PC-9 (cell line): ENCODE measurements at regions of chr3 and their contacts with region 1.

Region 1: DNA sequence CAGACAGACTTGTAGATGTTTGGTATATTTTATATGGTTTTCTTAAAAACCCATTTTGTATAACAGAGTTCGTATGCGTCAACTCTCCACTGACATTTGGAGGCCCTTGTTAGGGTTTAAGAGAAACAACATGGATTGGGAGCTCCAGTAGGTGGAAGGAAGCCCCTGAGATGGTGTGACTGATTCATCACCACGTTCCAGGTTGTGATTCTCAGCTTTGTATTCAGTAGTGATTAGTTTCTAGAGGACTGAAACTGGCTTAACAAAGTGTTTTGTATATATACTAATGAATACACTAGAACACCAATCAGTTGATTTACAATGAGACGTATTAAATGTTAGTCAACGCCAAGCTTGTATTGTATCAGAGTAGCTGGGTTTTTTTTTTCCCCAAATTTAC is 33.9 kb downstream of the SNRK start:
- DNase-seq: no peak
- H3K4me3 ChIP-seq: no peak overlapping the region
- H3K27ac ChIP-seq: no peak overlapping the region
- H3K4me1 ChIP-seq: no peaks in the 10 kb centered on the region
- H3K27me3 ChIP-seq: no peaks in the 10 kb centered on the region
- CTCF ChIP-seq: no peak

Region 2: DNA sequence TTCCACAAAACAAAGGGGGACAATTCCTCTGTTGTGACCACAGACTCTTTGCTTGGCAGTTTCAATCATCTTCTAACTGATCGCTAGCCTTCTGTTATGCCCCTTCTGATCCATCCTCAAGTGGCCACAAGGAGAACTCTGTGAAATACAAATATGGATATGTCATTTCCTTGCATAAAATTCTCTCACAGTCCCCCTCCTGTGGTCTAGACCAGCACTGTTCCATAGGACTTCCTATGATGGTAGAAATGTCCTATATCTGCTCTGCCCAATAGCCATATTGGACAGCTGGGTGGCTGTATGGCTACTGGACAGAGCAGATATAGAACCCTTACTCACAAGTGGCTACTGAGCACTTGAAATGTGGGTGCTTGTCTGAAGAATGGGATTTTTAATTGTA is 59.9 kb before region 1 on chr3:
- CTCF ChIA-PET with region 1: no interaction called
- POLR2A ChIA-PET with region 1: no interaction called
- intact Hi-C with region 1: no loop called
- DNase-seq: no peak
- H3K4me3 ChIP-seq: no peak overlapping the region
- H3K27ac ChIP-seq: no peak overlapping the region
- H3K4me1 ChIP-seq: no peaks in the 10 kb centered on the region
- H3K27me3 ChIP-seq: no peaks in the 10 kb centered on the region
- CTCF ChIP-seq: no peak

Region 3: GRCh38 chr3:43298292-43298691 is 22.0 kb before region 1 on chr3:
- CTCF ChIA-PET with region 1: no interaction called
- POLR2A ChIA-PET with region 1: interaction called, 15 read pairs
- intact Hi-C with region 1: no loop called
- DNase-seq: no peak
- H3K4me3 ChIP-seq: no peak overlapping the region
- H3K27ac ChIP-seq: no peak overlapping the region
- H3K4me1 ChIP-seq: peaks cover 14% of the 10 kb centered on the region; the same call in 1 of the 2 replicates
- H3K27me3 ChIP-seq: no peaks in the 10 kb centered on the region
- CTCF ChIP-seq: no peak